PC-3 (cell line): ENCODE measurements at regions of chr5 and their contacts with region 1.

Region 1: DNA sequence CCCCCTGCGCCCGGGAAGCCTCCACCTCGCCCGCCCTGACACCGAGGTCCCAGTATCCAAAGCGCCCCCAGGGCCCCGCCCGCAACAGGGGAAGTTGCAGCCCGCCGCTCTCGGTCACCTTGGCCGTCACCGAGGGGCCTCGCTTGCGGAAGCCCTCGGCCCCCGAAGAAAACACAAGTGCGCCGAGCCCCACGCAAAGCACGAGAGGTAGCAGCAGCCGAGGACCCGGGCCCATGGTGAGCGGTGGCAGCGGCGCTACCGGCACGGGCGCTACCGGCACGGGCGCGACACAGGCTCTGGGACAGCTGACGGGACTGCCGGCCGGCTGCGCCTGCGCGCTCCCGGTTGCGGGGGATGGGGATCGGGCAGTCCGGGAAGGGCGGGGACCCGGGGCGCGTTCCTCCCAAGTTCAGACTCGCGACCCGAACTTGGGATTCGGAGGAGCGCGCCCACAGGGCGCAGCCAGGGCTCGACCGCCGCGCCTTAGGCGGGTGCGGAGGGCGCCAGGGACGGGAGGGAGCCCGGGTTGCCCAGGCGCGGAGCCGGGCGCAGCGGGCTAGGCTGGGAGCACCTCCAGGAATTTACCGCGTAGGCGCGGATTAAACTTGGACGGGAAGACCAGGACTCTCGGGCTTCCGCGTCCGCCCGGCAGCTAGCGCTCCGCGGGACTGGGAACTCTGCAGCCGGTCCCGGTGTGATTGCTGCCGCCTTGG is at the start of gene PPIC:
- DNase-seq: peak; percentile 73
- ATAC-seq: peak; percentile 86
- H3K4me3 ChIP-seq: peak within 1 kb of the TSS; percentile 90
- H3K27ac ChIP-seq: peak within 1 kb of the TSS; percentile 47
- H3K4me1 ChIP-seq: 0 out of 2 replicates have a peak, but pooled peaks cover 8% of the 10 kb centered on the region
- H3K27me3 ChIP-seq: no peaks in the 10 kb centered on the region
- CTCF ChIP-seq: no peak
- total RNA-seq, gene PPIC: 8.8 and 14.6 TPM in 2 replicates

Region 2: GRCh38 chr5:122697191-122697590 is 339.4 kb before region 1 on chr5:
- CTCF ChIA-PET with region 1: interaction called, 15 read pairs
- POLR2A ChIA-PET with region 1: no interaction called
- intact Hi-C with region 1: no loop called
- DNase-seq: no peak
- ATAC-seq: no peak
- H3K4me3 ChIP-seq: no peak overlapping the region
- H3K27ac ChIP-seq: no peak overlapping the region
- H3K4me1 ChIP-seq: no peaks in the 10 kb centered on the region
- H3K27me3 ChIP-seq: no peaks in the 10 kb centered on the region
- CTCF ChIP-seq: no peak

Region 3: DNA sequence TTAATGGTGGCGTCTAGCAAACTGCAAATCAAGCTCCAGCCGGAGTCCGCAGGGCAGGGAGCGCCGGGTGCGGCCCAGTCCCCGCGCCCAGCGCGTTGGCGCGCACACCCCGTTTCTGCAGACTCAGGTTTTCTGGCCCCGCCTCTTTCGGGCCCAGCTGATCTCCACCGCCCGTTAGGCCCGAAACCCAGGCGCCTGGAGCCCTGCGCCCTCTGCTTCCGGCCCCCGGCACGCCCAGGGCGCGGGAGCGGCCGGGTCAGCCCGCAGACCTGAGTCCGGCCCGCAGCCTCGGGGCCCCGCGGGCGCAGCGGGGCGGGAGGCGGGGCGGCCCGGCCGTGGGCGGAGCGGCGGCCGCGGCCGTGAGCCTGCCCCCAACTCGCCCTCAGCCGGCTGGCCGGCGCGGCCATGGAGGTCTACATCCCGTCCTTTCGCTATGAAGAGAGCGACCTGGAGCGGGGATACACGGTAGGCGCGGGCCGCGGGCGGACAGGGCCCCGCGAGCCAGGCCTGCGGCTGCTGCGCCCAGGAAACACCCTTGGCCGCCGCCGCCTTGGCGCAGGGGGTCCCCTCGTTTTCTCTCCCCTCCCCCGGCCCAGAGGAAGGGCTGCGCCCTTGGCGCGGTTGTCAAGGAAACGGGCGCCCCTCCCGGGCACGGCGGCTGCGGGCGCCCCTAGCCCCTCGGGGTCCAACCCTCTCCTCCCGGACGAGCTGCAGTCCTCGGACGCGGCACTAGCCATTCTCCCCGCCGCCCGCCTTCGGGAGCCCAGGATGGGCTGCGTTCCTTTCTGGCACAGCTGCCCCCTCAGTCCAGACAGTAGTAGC is 191.1 kb before region 1 on chr5 and contains the start of gene SNX24:
- CTCF ChIA-PET with region 1: no interaction called
- POLR2A ChIA-PET with region 1: no interaction called
- intact Hi-C with region 1: loop called (anchors 10 kb)
- DNase-seq: peak; percentile 82
- ATAC-seq: peak; percentile 85
- H3K4me3 ChIP-seq: peak within 1 kb of the TSS; percentile 84
- H3K27ac ChIP-seq: peak within 1 kb of the TSS; percentile 43
- H3K4me1 ChIP-seq: peaks cover 47% of the 10 kb centered on the region
- H3K27me3 ChIP-seq: no peaks in the 10 kb centered on the region
- CTCF ChIP-seq: no peak
- total RNA-seq, gene SNX24: 7.4 and 10.3 TPM in 2 replicates